ENCODE measurements at regions of chr5 and their contacts with region 1.

Region 1: DNA sequence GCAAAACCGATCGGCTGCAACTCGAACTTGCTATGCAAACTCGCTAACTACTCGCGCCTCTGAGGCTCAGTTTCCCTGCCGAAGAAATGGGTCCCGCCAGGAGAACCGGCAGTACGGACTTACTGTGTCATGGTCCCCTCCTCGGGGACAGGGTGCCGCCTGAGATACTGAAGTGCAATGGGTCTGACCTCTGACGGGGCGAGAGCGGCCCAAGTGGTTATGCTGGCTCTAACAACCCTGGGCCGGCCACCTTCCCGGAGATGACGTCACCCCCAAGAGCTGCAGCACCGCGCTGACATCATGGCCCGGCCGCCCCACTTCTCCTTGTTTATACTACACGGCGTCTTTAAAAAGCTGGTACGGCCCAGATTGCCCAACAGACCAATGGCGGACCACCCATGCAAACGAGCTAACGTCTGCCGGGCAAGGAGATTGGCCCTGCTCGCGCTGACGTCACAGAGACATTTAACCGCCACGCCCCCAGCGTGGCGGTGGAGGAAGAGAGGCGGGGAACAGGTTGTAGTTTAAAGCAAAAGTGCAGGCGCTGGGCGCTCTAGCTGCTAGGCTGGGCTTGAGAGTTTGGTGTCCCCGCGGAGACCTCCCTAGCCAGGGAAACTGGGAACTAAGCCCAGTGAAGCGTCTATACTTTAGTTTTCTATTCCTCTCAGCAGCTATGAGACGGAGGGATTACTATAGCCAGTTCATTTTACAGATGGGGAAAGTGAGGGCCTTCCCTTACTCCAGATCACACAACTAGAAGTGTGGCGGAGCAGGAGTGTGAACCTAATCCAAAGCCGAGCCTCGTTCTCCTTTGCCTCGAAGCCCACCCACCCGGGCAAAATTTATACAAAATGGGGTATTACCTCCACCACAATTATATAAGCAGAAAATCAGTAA is 654 bp upstream of the RNF44 start:
- DNase-seq: peak; percentile 89 to 98
- H3K4me3 ChIP-seq: peak overlapping the region; percentile 83 to 98 (median 93)
- H3K27ac ChIP-seq: peak overlapping the region; percentile 97
- H3K4me1 ChIP-seq: peaks cover 13 to 38% (median 35%) of the 10 kb centered on the region in 4 experiments
- H3K27me3 ChIP-seq: no peaks in the 10 kb centered on the region; a peak in 1 of 7 replicates
- CTCF ChIP-seq: no peak
- EP300 ChIP-seq: no peak
- POLR2A ChIP-seq: peak in 1 of 2 experiments; percentile 91; a peak in 2 of 3 replicates
- RAD21 ChIP-seq: no peak

Region 2: GRCh38 chr5:176405656-176406427 is 132.0 kb before region 1 on chr5:
- CTCF ChIA-PET with region 1: no interaction called
- POLR2A ChIA-PET with region 1: interaction called, 19 read pairs
- DNase-seq: peak in 1 of 2 experiments; percentile 53
- H3K4me3 ChIP-seq: no peak overlapping the region
- H3K27ac ChIP-seq: no peak overlapping the region
- H3K4me1 ChIP-seq: no peaks in the 10 kb centered on the region; a peak in 1 of 7 replicates
- H3K27me3 ChIP-seq: no peaks in the 10 kb centered on the region
- CTCF ChIP-seq: peak; percentile 77 to 90 (median 90)
- EP300 ChIP-seq: no peak
- POLR2A ChIP-seq: no peak
- RAD21 ChIP-seq: peak; percentile 57 to 70

Region 3: GRCh38 chr5:176472671-176473070 is 65.2 kb before region 1 on chr5:
- CTCF ChIA-PET with region 1: no interaction called
- POLR2A ChIA-PET with region 1: interaction called, 11 read pairs
- DNase-seq: no peak
- H3K4me3 ChIP-seq: no peak overlapping the region
- H3K27ac ChIP-seq: no peak overlapping the region
- H3K4me1 ChIP-seq: no peaks in the 10 kb centered on the region
- H3K27me3 ChIP-seq: no peaks in the 10 kb centered on the region
- CTCF ChIP-seq: no peak
- EP300 ChIP-seq: no peak
- POLR2A ChIP-seq: no peak
- RAD21 ChIP-seq: no peak

Region 4: DNA sequence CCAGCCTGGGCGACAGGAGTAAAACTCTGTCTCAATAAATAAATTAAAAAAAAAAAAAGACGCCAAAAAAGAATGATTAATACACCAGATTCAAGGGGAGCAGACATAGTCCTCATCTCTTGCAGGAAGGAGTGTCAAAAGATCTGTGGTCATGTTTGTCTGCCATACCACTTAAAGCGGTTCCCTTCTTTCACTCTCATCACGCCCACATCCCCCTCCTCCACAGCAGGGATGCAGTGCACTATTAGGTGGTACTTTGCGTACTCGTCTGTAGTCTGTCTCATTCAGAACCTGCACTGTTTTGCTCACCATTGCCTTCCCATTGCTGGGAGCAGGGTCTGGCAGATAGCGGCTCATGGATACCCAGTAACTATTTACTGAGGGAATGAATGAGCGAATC is 22.5 kb after region 1 on chr5:
- CTCF ChIA-PET with region 1: interaction called, 27 read pairs
- POLR2A ChIA-PET with region 1: interaction called, 63 read pairs
- DNase-seq: no peak
- H3K4me3 ChIP-seq: no peak overlapping the region
- H3K27ac ChIP-seq: no peak overlapping the region
- H3K4me1 ChIP-seq: peaks cover 0 to 5% (median under 1%) of the 10 kb centered on the region in 4 experiments; a peak in 3 of 7 replicates
- H3K27me3 ChIP-seq: no peaks in the 10 kb centered on the region
- CTCF ChIP-seq: no peak
- EP300 ChIP-seq: no peak
- POLR2A ChIP-seq: no peak
- RAD21 ChIP-seq: no peak

Region 5: DNA sequence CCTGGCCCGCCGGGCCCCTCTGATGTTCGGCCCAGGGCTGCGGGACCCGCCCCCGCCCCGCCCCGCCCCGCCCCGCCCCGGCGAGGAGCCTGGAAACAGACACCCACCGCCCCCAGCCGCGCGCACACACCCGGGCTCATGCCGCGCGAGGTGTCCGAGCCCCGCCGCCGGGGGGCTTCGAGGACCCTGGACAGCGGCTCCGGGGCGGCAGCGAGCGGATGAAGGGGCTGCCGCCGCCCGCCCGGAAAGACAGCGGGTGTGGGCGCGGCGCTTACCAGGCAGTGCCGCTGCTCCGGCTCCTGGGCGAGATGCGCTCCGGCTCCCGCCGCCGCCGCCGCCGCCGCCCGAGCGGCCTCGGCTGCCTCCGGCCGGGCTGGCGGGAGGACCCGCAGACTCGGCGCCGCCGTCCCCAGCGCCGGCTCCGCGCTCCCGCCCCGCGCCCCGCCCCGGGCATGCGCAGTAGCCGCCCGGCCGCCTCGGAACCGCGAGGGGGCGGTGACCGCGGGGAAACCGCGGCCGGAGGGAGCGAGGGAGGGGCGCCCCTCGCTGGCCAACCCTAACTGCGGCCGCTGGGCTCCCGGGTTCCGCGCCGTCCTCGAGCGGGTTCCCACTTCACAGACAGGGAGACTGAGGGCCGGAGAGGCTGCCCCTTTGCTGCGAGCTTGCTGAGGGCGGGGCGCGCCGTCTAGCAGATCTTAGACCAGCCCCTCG is 72.0 kb after region 1 on chr5 and contains the start of gene GPRIN1:
- CTCF ChIA-PET with region 1: interaction called, 3 read pairs
- POLR2A ChIA-PET with region 1: interaction called, 14 read pairs
- DNase-seq: peak in 1 of 2 experiments; percentile 83
- H3K4me3 ChIP-seq: peak within 1 kb of the TSS; percentile 46 to 70 (median 65)
- H3K27ac ChIP-seq: no peak within 1 kb of the TSS
- H3K4me1 ChIP-seq: peaks cover 0 to 8% (median 5%) of the 10 kb centered on the region in 4 experiments; a peak in 5 of 7 replicates
- H3K27me3 ChIP-seq: peaks cover 0 to 14% (median 10%) of the 10 kb centered on the region in 4 experiments; a peak in 5 of 7 replicates
- CTCF ChIP-seq: peak in 2 of 3 experiments; percentile 24 to 81; a peak in 3 of 4 replicates
- EP300 ChIP-seq: no peak
- POLR2A ChIP-seq: no peak
- RAD21 ChIP-seq: peak; percentile 22 to 55; a peak in 3 of 4 replicates
- total RNA-seq, gene GPRIN1: 12.0 and 12.8 TPM in 2 replicates

Region 6: DNA sequence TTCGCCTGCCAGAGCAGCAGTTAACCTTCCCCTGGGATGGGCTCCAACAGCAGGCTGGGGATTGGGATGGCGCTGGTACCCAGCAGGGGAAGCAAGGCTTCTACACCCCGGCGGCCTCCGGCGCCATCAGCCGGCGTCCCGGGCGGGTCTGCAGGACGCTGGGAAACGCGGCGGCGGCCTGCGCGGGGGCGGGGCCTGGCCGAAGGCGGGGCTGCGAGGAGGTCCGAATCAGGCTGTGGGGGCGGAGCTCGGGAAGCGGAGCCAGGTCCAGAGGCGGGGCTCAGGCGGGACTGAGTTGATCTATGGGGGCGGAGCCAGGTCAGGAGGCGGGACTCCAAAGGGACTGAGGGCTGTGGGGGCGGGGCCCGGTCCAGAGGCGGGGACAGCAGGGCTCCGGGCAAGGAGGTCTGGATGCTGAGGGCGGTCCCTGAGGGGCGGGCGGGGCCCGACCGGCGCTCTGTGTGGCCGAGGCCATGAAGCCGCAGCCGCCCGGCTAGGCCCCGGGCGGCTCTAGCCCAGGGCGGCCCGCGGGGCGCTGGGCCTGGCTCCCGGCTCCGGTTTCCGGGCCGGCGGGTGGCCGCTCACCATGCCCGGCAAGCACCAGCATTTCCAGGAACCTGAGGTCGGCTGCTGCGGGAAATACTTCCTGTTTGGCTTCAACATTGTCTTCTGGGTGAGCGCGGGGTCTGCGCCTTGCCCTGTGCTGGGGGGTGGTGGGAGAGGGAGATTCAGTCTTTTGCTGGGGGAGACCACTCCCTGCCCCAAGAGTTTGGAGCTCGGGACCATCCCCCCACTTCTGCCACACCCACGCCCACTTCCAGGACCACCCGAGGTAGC is 109.4 kb after region 1 on chr5 and contains the start of gene TSPAN17:
- CTCF ChIA-PET with region 1: no interaction called
- POLR2A ChIA-PET with region 1: interaction called, 15 read pairs
- DNase-seq: peak; percentile 99 to 100
- H3K4me3 ChIP-seq: peak within 1 kb of the TSS; percentile 59 to 95 (median 75)
- H3K27ac ChIP-seq: peak within 1 kb of the TSS; percentile 41; the same call in 1 of the 2 replicates
- H3K4me1 ChIP-seq: peaks cover 0 to 49% (median 26%) of the 10 kb centered on the region in 4 experiments; a peak in 6 of 7 replicates
- H3K27me3 ChIP-seq: no peaks in the 10 kb centered on the region; a peak in 1 of 7 replicates
- CTCF ChIP-seq: peak in 1 of 3 experiments; percentile 13; a peak in 1 of 4 replicates
- EP300 ChIP-seq: 0 out of 3 replicates have a peak, but pooled peaks of 1 of the 2 experiments have one; percentile 1
- POLR2A ChIP-seq: peak in 1 of 2 experiments; percentile 93; a peak in 2 of 3 replicates
- RAD21 ChIP-seq: peak; percentile 28 to 50; a peak in 3 of 4 replicates
- total RNA-seq, gene TSPAN17: 53.7 and 54.7 TPM in 2 replicates